Activated CD4-positive, alpha-beta memory T cell treated with anti-CD3 and anti-CD28 coated beads, Interleukin-2, amount 10 ng/mL, durations not matched to agents 7 days and 5 days (primary cell): ENCODE measurements at regions of chr1 and their contacts with region 1.

Region 1: DNA sequence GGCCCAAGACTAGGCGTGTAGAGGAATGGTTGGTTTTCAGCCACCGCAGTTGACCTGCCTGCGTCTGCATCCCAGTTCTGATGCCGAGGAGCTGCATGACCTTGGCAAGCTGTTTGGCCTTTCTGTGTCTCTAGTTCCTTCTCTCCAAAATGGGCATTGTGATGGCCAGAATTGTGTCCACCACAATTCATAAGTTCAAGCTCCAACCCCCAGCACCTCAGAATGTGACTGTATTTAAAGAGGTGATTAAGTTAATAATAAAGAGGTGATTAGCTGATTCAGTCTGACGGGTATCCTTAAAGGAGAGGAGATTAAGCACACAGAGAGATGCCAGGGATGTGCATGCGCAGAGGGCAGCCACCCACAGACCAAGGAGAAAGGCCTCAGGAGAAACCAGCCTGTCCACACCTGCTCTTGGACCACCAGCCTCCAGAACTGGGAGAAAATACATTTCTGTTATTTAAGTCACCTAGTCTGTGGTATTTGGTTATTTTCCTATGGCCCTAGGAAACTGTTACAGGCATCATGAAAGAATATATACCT is 28.5 kb downstream of the MAB21L3 start:
- DNase-seq: no peak
- H3K4me3 Mint-ChIP-seq: no peak overlapping the region
- H3K27ac Mint-ChIP-seq: no peak overlapping the region
- H3K4me1 Mint-ChIP-seq: peaks cover 7% of the 10 kb centered on the region
- H3K27me3 Mint-ChIP-seq: peaks cover 9% of the 10 kb centered on the region

Region 2: GRCh38 chr1:115807723-115808122 is 331.9 kb before region 1 on chr1:
- CTCF ChIA-PET with region 1: no interaction called
- POLR2A ChIA-PET with region 1: no interaction called
- DNase-seq: peak; percentile 28
- H3K4me3 Mint-ChIP-seq: no peak overlapping the region
- H3K27ac Mint-ChIP-seq: no peak overlapping the region
- H3K4me1 Mint-ChIP-seq: no peaks in the 10 kb centered on the region
- H3K27me3 Mint-ChIP-seq: peaks cover 18% of the 10 kb centered on the region

Region 3: GRCh38 chr1:115952645-115953044 is 187.0 kb before region 1 on chr1:
- CTCF ChIA-PET with region 1: no interaction called
- POLR2A ChIA-PET with region 1: no interaction called
- DNase-seq: no peak
- H3K4me3 Mint-ChIP-seq: no peak overlapping the region
- H3K27ac Mint-ChIP-seq: no peak overlapping the region
- H3K4me1 Mint-ChIP-seq: peaks cover 7% of the 10 kb centered on the region
- H3K27me3 Mint-ChIP-seq: peaks cover 16% of the 10 kb centered on the region

Region 4: GRCh38 chr1:115976062-115976920 is 163.4 kb before region 1 on chr1 and contains the start of gene SLC22A15:
- CTCF ChIA-PET with region 1: no interaction called
- POLR2A ChIA-PET with region 1: no interaction called
- DNase-seq: peak; percentile 61
- H3K4me3 Mint-ChIP-seq: peak within 1 kb of the TSS; percentile 89
- H3K27ac Mint-ChIP-seq: peak within 1 kb of the TSS; percentile 67
- H3K4me1 Mint-ChIP-seq: peaks cover 14% of the 10 kb centered on the region
- H3K27me3 Mint-ChIP-seq: peaks cover 28% of the 10 kb centered on the region
- total RNA-seq, gene SLC22A15: 1.2 to 1.3 TPM

Region 5: GRCh38 chr1:116151739-116152576 is 12.3 kb after region 1 on chr1:
- CTCF ChIA-PET with region 1: interaction called, 65 read pairs
- POLR2A ChIA-PET with region 1: interaction called, 3 read pairs
- DNase-seq: peak; percentile 78
- H3K4me3 Mint-ChIP-seq: peak overlapping the region; percentile 31
- H3K27ac Mint-ChIP-seq: no peak overlapping the region
- H3K4me1 Mint-ChIP-seq: peaks cover 8% of the 10 kb centered on the region
- H3K27me3 Mint-ChIP-seq: peaks cover 23% of the 10 kb centered on the region

Region 6: DNA sequence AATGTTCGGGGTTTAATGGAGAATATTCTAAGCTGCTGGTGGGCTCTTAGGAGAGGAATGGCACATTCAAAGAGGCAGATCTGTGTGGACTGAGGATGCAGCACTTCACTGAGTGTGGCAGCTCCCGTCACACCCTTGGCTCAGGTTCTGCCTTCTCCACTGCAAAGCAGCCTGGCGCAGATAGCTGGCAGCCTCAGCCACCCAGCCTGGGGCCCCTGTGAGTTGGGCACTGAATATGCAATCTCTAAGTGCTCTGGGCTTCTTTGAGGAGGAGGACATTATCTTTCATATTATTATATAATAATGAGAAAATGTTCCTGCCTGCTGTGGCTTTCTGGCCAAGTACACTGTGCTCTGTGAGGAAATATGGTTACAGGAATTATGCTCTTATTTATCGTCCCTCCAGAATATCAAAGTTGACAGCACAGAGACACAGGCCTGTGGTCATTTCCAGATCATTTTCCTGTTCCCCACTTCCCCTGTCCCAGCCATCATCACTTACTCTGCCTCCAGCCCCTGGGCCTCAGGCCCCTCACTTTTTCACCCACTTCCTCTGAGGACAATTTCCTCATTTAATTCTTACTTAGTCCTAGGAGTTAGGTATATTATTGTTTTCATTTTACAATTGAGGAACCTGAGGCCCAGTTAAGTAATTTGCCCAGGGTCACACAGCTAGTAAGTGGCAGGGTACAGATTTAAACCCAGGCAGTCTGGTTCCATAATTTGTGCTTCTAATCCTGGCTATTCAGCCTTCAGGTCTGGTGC is 25.1 kb after region 1 on chr1:
- CTCF ChIA-PET with region 1: interaction called, 15 read pairs
- POLR2A ChIA-PET with region 1: no interaction called
- DNase-seq: no peak
- H3K4me3 Mint-ChIP-seq: no peak overlapping the region
- H3K27ac Mint-ChIP-seq: no peak overlapping the region
- H3K4me1 Mint-ChIP-seq: peaks cover 14% of the 10 kb centered on the region
- H3K27me3 Mint-ChIP-seq: peaks cover 8% of the 10 kb centered on the region

Region 7: DNA sequence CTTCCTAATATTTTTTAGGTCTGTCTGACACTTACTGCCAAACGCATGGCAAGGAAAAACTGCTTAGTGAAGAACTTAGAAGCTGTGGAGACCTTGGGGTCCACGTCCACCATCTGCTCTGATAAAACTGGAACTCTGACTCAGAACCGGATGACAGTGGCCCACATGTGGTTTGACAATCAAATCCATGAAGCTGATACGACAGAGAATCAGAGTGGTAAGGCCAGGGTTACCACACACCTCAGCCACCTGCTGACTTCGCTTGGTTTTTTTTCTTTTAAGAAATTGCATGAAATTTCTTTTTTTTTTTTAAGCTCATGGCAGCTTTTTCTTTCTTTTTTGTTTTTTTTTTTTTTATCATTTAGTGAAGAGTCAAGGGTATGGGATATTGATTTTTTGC is 250.5 kb after region 1 on chr1:
- CTCF ChIA-PET with region 1: interaction called, 13 read pairs
- POLR2A ChIA-PET with region 1: no interaction called
- DNase-seq: peak; percentile 75
- H3K4me3 Mint-ChIP-seq: no peak overlapping the region
- H3K27ac Mint-ChIP-seq: peak overlapping the region; percentile 50
- H3K4me1 Mint-ChIP-seq: peaks cover 63% of the 10 kb centered on the region
- H3K27me3 Mint-ChIP-seq: no peaks in the 10 kb centered on the region

Region 8: GRCh38 chr1:116485071-116485735 is 345.5 kb after region 1 on chr1:
- CTCF ChIA-PET with region 1: interaction called, 213 read pairs
- POLR2A ChIA-PET with region 1: interaction called, 5 read pairs
- DNase-seq: peak; percentile 87
- H3K4me3 Mint-ChIP-seq: no peak overlapping the region
- H3K27ac Mint-ChIP-seq: no peak overlapping the region
- H3K4me1 Mint-ChIP-seq: peaks cover 9% of the 10 kb centered on the region
- H3K27me3 Mint-ChIP-seq: peaks cover 3% of the 10 kb centered on the region

Region 9: DNA sequence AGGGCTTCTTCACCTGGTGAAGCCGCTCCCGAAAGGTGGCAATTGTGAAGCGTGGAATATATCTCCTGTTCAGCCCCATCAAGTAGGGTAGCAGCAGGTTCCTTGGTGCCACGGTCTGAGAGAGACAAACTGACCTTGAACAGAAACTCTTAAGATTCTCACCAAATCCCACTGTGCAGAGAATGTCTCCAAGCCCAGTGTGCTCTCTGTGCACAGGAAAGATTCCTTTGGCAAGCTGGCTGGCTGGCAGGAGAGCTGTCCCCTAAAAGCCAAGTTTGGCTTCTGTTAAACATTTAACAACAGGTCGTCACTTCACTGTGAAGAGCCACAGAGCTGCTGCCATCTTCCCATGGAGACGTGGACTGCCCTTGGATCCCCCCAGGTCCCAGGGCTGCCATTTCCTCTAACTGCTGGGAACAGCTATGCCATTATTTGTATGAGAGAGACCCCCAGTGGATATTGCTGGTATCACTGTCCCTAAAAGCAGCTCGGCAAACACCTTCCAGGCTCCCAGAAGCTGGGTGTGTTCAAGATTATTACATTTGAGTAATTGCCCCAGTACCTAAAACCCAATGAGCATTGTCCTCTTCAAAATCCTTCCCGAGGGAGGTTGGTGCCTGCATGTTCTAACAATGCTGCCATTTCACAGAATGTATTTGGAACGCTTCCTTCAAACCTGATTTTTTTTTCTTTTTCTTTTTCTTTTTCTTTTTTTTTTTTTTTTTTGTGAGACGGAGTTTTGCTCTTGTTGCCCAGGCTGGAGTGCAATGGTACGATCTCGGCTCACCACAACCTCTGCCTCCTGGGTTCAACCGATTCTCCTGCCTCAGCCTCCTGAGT is 359.3 kb after region 1 on chr1:
- CTCF ChIA-PET with region 1: interaction called, 99 read pairs
- POLR2A ChIA-PET with region 1: interaction called, 10 read pairs
- DNase-seq: peak; percentile 54
- H3K4me3 Mint-ChIP-seq: no peak overlapping the region
- H3K27ac Mint-ChIP-seq: peak overlapping the region; percentile 53
- H3K4me1 Mint-ChIP-seq: peaks cover 64% of the 10 kb centered on the region
- H3K27me3 Mint-ChIP-seq: no peaks in the 10 kb centered on the region